ENCODE measurements at regions of chr19 and their contacts with region 1.

Region 1: DNA sequence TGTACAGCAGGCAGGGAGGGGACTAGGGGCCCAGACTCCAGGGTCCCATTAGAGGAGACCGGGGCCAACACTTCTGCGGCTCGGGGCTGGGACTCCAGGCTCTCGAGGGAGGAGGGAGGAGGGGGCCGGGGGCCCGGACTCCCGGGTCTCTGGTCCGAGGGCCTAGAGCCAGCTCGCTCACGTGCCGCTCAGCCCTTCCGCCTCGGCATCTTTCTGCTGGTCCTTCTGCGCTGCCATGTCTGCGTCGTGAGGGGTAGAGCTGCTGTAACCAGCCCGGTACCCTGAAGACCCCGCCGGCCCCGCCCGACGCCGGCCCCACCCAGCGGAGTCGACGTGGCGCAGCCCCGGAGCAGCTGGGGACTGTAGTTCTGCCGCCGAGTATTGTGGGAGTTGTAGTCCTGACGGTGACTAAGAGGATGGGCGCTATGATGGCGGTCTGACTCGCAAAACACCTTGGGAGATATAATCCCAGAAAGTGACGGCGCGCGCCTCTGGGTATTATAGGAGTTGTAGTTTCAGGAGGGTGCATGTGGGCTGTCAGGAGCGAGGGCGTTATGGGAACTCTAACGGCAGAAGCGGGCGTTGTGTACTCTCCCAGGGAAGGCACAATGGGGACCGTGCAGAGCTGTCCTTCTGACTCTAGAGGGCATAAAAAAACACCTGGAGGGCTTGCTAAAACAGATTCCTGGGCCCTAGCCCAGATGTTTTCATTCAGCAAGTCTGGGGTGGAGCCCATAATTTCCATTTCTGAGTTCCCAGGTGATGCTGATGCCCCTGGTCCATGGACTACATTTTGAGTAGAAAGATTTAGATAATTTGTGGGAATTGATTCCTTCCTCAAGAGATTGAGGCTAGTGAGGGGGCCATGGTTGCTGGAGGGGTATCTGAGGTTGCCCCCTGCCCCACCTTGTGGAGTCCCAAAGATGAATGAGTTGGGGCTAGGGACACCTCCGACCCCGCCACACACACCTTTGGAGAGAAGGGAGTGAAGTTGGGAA is at the start of gene RABAC1:
- DNase-seq: peak; percentile 97
- H3K4me3 Mint-ChIP-seq: peak within 1 kb of the TSS; percentile 89
- H3K27ac Mint-ChIP-seq: peak within 1 kb of the TSS; percentile 92
- H3K4me1 Mint-ChIP-seq: peaks cover 14% of the 10 kb centered on the region
- H3K27me3 Mint-ChIP-seq: no peaks in the 10 kb centered on the region
- total RNA-seq, gene RABAC1: 37.2 and 41.5 TPM in 2 replicates

Region 2: DNA sequence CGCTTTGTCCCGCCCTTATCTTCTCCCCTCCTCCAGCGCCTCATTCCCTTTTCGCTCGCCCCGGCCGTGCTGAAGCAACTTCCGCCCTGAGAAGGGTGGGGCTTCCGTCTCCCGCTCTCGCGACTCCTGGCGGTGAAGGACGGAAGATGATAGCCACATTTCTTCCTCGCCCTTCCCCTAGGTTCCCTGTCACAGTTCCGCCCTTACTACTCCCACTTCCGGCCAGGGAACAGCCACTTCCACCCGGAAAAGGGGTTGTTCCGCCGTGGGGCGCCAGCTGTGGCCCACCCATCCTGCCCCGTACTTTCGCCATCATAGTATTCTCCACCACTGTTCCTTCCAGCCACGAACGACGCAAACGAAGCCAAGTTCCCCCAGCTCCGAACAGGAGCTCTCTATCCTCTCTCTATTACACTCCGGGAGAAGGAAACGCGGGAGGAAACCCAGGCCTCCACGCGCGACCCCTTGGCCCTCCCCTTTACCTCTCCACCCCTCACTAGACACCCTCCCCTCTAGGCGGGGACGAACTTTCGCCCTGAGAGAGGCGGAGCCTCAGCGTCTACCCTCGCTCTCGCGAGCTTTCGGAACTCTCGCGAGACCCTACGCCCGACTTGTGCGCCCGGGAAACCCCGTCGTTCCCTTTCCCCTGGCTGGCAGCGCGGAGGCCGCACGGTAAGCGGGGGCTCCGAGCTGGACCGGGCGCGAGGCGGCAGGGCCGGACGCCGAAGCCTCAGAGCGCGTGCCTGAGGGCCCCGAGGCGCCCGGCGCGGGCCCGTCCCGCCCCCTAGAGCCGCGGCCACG is 99.5 kb before region 1 on chr19 and contains the start of gene RPS19:
- intact Hi-C with region 1: loop called (anchors 1 kb)
- DNase-seq: peak; percentile 100
- H3K4me3 Mint-ChIP-seq: peak within 1 kb of the TSS; percentile 89
- H3K27ac Mint-ChIP-seq: peak within 1 kb of the TSS; percentile 98
- H3K4me1 Mint-ChIP-seq: peaks cover 44% of the 10 kb centered on the region
- H3K27me3 Mint-ChIP-seq: peaks cover 8% of the 10 kb centered on the region
- total RNA-seq, gene RPS19: 2,909 and 2,931 TPM in 2 replicates

Region 3: GRCh38 chr19:41934849-41935374 is 24.4 kb before region 1 on chr19:
- intact Hi-C with region 1: no loop called
- DNase-seq: peak; percentile 94
- H3K4me3 Mint-ChIP-seq: peak overlapping the region; percentile 12
- H3K27ac Mint-ChIP-seq: peak overlapping the region; percentile 70
- H3K4me1 Mint-ChIP-seq: peaks cover 40% of the 10 kb centered on the region
- H3K27me3 Mint-ChIP-seq: peaks cover 22% of the 10 kb centered on the region

Region 4: DNA sequence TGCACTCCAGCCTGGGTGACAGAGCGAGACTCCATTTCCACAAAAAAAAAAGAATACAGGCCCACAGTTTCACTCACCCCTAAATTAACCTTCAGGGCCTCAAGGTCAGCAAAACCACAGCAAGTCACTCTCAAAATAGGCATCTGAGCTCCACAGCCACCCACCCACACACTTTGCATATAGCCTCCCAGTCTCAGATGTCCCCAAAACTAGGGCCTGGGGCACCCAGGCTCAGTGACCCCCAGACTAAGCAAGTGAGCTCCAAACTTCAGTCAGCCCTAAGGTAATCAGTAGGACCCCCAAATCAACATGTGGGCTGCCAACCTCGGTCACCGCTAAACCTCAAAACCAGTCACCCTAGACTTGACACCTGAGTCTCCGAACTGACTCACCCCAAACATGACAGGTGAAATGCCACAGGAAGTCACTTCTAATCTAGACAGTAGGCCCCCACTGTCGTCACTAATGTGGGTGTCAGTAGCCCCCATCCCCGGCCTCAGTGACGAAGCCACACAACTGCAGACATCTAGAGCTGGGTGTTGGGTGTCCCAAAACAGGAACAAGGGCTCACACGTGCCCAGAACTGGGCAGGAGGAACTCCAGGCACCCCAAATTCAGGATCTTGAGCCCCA is 14.1 kb before region 1 on chr19:
- intact Hi-C with region 1: loop called (anchors 1 kb)
- DNase-seq: peak; percentile 90
- H3K4me3 Mint-ChIP-seq: peak overlapping the region; percentile 76
- H3K27ac Mint-ChIP-seq: peak overlapping the region; percentile 99
- H3K4me1 Mint-ChIP-seq: peaks cover 49% of the 10 kb centered on the region
- H3K27me3 Mint-ChIP-seq: peaks cover 9% of the 10 kb centered on the region

Region 5: GRCh38 chr19:41993612-41994483 is 34.5 kb after region 1 on chr19 and contains the start of gene ATP1A3:
- intact Hi-C with region 1: no loop called
- DNase-seq: peak; percentile 91
- H3K4me3 Mint-ChIP-seq: peak within 1 kb of the TSS; percentile 71
- H3K27ac Mint-ChIP-seq: no peak within 1 kb of the TSS
- H3K4me1 Mint-ChIP-seq: peaks cover 22% of the 10 kb centered on the region
- H3K27me3 Mint-ChIP-seq: peaks cover 44% of the 10 kb centered on the region
- total RNA-seq, gene ATP1A3: 0.68 and 1.2 TPM in 2 replicates

Region 6: DNA sequence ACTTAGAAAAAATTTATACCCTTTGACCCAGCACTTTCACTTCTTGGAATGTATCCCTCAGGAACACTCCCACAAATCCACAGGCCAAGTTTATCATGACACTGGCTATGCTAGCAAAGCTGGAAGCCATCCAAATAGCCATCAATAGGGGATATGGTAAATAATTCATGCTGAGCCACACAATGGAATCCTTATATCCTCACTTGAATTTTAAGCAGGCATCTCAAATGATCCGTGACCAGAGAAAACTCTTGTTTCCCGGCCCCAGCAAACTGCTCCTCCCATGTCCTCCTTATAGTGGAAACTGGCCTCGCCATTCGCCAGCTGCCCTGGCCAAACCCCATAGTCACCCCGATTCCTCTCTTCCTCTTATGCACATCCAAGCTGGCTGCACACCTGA is 73.1 kb after region 1 on chr19:
- intact Hi-C with region 1: loop called (anchors 1 kb)
- DNase-seq: no peak
- H3K4me3 Mint-ChIP-seq: no peak overlapping the region
- H3K27ac Mint-ChIP-seq: no peak overlapping the region
- H3K4me1 Mint-ChIP-seq: peaks cover 9% of the 10 kb centered on the region
- H3K27me3 Mint-ChIP-seq: peaks cover 4% of the 10 kb centered on the region